ENCODE measurements at regions of chr15 and their contacts with region 1.

Region 1: GRCh38 chr15:77059786-77060361 is 11.0 kb downstream of the TSPAN3 start:
- DNase-seq: no peak
- ATAC-seq: peak in 4 of 8 donors; percentile 32 to 54 (median 48)
- H3K4me3 ChIP-seq: no peak overlapping the region
- H3K27ac ChIP-seq: peak overlapping the region in 4 of 10 donors; percentile 35 to 78 (median 48)
- H3K4me1 ChIP-seq: peaks cover 0 to 54% (median 42%) of the 10 kb centered on the region in 9 donors
- H3K27me3 ChIP-seq: no peaks in the 10 kb centered on the region
- CTCF ChIP-seq: no peak

Region 2: GRCh38 chr15:77042955-77043920 is 16.6 kb before region 1 on chr15:
- intact Hi-C with region 1: loop called in 2 of 10 experiments (anchors 1 to 2 kb)
- DNase-seq: no peak
- ATAC-seq: no peak
- H3K4me3 ChIP-seq: no peak overlapping the region
- H3K27ac ChIP-seq: peak overlapping the region in 3 of 10 donors; percentile 48 to 57 (median 51)
- H3K4me1 ChIP-seq: peaks cover 0 to 39% (median 19%) of the 10 kb centered on the region in 9 donors
- H3K27me3 ChIP-seq: no peaks in the 10 kb centered on the region
- CTCF ChIP-seq: no peak

Region 3: GRCh38 chr15:77048135-77048876 is 11.6 kb before region 1 on chr15:
- intact Hi-C with region 1: loop called in 2 of 10 experiments (anchors 1 to 2 kb)
- DNase-seq: no peak
- ATAC-seq: no peak
- H3K4me3 ChIP-seq: no peak overlapping the region
- H3K27ac ChIP-seq: no peak overlapping the region
- H3K4me1 ChIP-seq: peaks cover 0 to 19% (median 14%) of the 10 kb centered on the region in 9 donors
- H3K27me3 ChIP-seq: no peaks in the 10 kb centered on the region
- CTCF ChIP-seq: no peak

Region 4: GRCh38 chr15:77219841-77220240 is 160.0 kb after region 1 on chr15:
- intact Hi-C with region 1: no loop called
- DNase-seq: no peak
- ATAC-seq: no peak
- H3K4me3 ChIP-seq: no peak overlapping the region
- H3K27ac ChIP-seq: no peak overlapping the region
- H3K4me1 ChIP-seq: peaks cover 0 to 32% (median 11%) of the 10 kb centered on the region in 9 donors
- H3K27me3 ChIP-seq: no peaks in the 10 kb centered on the region
- CTCF ChIP-seq: no peak

Measured in heart right ventricle (tissue), 16 donors.